RWPE1 (cell line): ENCODE measurements at regions of chr20 and their contacts with region 1.

Region 1: GRCh38 chr20:59515014-59515905 is 89.1 kb upstream of the PHACTR3 start:
- DNase-seq: peak; percentile 91
- H3K27ac ChIP-seq: no peak overlapping the region
- CTCF ChIP-seq: peak; percentile 97

Region 2: GRCh38 chr20:59341805-59342634 is 173.2 kb before region 1 on chr20:
- CTCF ChIA-PET with region 1: no interaction called
- POLR2A ChIA-PET with region 1: no interaction called
- DNase-seq: no peak
- H3K27ac ChIP-seq: no peak overlapping the region
- CTCF ChIP-seq: no peak

Region 3: DNA sequence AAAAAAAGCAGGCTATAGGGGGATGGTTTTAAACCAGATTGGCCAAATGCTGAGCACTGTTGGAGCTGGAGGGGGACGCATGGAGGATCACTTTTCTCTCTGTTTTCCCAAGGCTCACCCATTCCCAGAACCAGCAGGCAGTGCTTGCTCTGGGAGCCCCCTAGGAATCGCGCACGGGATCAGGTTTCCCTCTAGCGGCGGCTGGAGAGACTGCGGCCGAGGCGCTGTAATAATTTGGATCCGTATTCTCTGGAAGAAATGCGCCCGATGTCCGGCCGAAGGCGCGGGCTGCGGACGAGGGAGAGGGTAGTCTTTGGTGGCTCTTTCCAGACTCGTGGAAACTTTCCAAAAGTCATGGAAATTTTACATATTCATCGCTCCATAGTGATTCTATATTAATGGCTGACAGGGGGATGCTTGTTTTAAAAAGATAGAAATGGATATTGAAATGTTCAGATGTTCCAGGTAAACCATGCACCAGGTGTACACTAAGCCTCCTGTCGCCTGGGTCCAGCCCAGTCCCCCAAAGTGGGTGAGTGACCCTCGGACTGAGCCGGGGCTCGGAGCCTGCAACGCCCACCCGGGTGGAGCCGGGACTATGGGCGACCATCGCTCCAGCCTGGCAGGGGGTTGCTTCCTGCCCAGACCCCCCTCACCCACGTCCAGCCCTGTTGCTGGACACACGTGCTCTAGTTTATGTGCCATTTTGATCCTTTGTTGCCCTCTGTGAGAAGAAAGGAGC is 10.4 kb after region 1 on chr20:
- CTCF ChIA-PET with region 1: interaction called, 14 read pairs
- POLR2A ChIA-PET with region 1: no interaction called
- DNase-seq: peak; percentile 78
- H3K27ac ChIP-seq: no peak overlapping the region
- CTCF ChIP-seq: peak; percentile 99